ENCODE measurements at regions of chr2 and their contacts with region 1.

Region 1: DNA sequence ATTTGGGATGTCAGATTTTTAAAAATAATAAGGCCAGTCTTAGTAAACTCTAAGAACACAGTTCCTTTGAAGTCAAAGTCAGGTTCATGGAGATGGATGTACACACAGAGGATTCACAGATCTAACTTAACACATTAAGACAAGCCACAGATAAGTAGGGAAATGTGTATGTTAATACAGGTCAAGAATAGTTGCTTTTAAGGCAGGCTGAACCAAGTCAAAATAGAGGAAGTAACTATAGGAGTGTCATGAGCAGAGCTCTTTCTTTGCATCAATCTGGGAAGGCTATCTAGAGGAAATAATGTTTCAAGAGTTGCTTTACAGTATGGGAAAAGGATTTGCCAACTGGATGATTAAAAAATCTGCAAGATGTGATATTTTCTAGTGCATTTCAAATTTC is 128.0 kb upstream of the FBXO11 start:
- DNase-seq: no peak
- ATAC-seq: no peak
- H3K4me3 Mint-ChIP-seq: no peak overlapping the region
- H3K27ac Mint-ChIP-seq: no peak overlapping the region
- H3K4me1 Mint-ChIP-seq: no peaks in the 10 kb centered on the region
- H3K27me3 Mint-ChIP-seq: no peaks in the 10 kb centered on the region
- CTCF ChIP-seq: no peak

Region 2: GRCh38 chr2:47617523-47618223 is 416.6 kb before region 1 on chr2:
- CTCF ChIA-PET with region 1: no interaction called
- POLR2A ChIA-PET with region 1: no interaction called
- DNase-seq: peak; percentile 24
- ATAC-seq: 0 out of 2 replicates have a peak, but pooled peaks have one; percentile 43
- H3K4me3 Mint-ChIP-seq: no peak overlapping the region
- H3K27ac Mint-ChIP-seq: no peak overlapping the region
- H3K4me1 Mint-ChIP-seq: peaks cover 33% of the 10 kb centered on the region
- H3K27me3 Mint-ChIP-seq: no peaks in the 10 kb centered on the region
- CTCF ChIP-seq: no peak

Region 3: GRCh38 chr2:47899915-47900816 is 134.1 kb before region 1 on chr2:
- CTCF ChIA-PET with region 1: no interaction called
- POLR2A ChIA-PET with region 1: interaction called, 11 read pairs
- DNase-seq: no peak
- ATAC-seq: no peak
- H3K4me3 Mint-ChIP-seq: no peak overlapping the region
- H3K27ac Mint-ChIP-seq: peak overlapping the region; percentile 7; the same call in 1 of the 2 replicates
- H3K4me1 Mint-ChIP-seq: peaks cover 61% of the 10 kb centered on the region
- H3K27me3 Mint-ChIP-seq: no peaks in the 10 kb centered on the region; the same call in 1 of the 2 replicates
- CTCF ChIP-seq: no peak

Region 4: DNA sequence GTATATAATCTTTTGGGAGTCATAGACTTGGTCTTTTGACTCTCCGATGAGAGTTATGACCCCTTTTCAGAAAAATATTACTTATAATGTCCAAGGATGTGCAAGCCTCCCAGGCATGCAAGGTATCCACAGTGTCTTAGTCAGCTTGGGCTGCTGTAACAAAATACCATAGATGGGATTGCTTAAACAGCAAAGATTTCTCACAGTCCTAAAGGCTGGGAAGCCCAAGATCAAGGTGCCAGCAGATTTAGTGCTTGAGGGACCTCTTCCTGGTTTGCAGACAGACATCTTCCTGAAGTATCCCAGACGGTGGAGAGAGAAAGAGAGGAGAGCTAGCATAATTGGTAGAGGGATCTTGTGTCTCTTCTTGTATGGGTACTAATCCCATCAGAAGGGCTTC is 92.4 kb before region 1 on chr2:
- CTCF ChIA-PET with region 1: no interaction called
- POLR2A ChIA-PET with region 1: no interaction called
- DNase-seq: no peak
- ATAC-seq: no peak
- H3K4me3 Mint-ChIP-seq: no peak overlapping the region
- H3K27ac Mint-ChIP-seq: no peak overlapping the region
- H3K4me1 Mint-ChIP-seq: peaks cover 16% of the 10 kb centered on the region
- H3K27me3 Mint-ChIP-seq: no peaks in the 10 kb centered on the region
- CTCF ChIP-seq: no peak

Region 5: DNA sequence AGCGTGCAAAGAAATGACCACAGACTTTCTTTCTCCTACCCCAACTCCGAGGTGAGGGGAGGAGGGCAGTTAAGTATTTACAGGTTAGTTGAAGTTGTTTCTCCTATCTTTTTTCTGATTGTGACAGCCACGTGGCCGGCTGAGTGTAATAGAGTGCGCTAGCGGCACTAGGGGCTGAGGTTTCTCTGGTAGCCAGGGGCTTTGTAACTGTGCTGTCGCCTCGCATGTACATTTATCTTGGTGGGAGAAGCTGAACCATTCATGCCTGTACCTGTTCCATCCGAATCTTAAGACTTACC is 281.6 kb after region 1 on chr2:
- CTCF ChIA-PET with region 1: no interaction called
- POLR2A ChIA-PET with region 1: no interaction called
- DNase-seq: peak; percentile 22
- ATAC-seq: no peak
- H3K4me3 Mint-ChIP-seq: peak overlapping the region; percentile 89
- H3K27ac Mint-ChIP-seq: peak overlapping the region; percentile 89
- H3K4me1 Mint-ChIP-seq: peaks cover 30% of the 10 kb centered on the region
- H3K27me3 Mint-ChIP-seq: no peaks in the 10 kb centered on the region
- CTCF ChIP-seq: no peak

Region 6: GRCh38 chr2:48328159-48328809 is 294.0 kb after region 1 on chr2:
- CTCF ChIA-PET with region 1: no interaction called
- POLR2A ChIA-PET with region 1: no interaction called
- DNase-seq: no peak
- ATAC-seq: no peak
- H3K4me3 Mint-ChIP-seq: no peak overlapping the region
- H3K27ac Mint-ChIP-seq: peak overlapping the region; percentile 6; the same call in 1 of the 2 replicates
- H3K4me1 Mint-ChIP-seq: peaks cover 50% of the 10 kb centered on the region
- H3K27me3 Mint-ChIP-seq: no peaks in the 10 kb centered on the region
- CTCF ChIP-seq: no peak

Measured in WTC11 (cell line).